Psoas muscle (tissue), 8 donors: ENCODE measurements at regions of chr6 and their contacts with region 1.

Region 1: DNA sequence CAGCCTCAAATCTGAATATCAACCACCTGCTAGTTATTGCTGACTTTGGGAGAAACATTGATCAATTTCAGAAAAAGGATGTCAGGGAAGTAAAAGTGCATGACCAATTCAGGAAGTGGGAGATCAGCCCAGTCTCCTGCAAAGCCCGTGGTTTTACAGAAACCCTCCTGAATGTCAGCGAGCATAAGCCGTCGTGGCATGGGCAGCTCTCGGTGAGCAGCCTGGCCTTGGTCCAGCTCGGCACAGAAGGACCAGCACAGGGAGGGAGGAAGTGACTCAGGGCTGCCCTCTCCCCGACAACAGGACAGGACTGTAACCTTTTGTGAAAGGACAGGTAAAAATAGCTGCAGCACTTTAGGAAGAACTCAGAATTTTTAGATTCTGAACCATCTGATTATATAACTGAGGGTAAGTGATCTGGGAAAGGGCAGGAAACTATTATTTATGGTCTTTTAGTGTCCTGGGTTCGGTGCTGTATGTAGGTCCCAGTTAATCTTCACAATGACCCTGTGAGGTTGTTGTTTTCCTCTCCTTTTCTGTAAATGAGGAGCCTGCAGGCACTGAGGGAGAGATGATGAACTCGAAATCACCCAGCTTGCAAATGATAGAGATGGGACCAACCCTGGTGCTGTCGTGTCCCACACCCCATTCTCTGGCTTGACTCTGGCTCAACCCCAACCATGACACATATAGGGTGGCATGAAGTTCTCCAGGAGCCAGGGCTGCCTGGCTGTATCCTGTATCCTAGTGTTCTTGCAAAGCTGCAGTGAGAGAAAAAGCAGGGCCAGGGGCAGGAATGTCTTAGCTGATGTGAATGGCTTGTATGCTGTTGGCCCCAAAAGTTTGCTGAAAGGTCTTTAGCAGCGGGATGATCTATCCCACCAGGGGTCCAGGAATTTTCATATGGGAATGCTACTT is 37.6 kb downstream of the NRN1 start:
- DNase-seq: peak; percentile 51 to 69
- ATAC-seq: peak; percentile 71 to 90 (median 79)
- H3K4me3 ChIP-seq: no peak overlapping the region
- H3K27ac ChIP-seq: no peak overlapping the region
- H3K4me1 ChIP-seq: no peaks in the 10 kb centered on the region
- H3K27me3 ChIP-seq: no peaks in the 10 kb centered on the region
- CTCF ChIP-seq: no peak

Region 2: DNA sequence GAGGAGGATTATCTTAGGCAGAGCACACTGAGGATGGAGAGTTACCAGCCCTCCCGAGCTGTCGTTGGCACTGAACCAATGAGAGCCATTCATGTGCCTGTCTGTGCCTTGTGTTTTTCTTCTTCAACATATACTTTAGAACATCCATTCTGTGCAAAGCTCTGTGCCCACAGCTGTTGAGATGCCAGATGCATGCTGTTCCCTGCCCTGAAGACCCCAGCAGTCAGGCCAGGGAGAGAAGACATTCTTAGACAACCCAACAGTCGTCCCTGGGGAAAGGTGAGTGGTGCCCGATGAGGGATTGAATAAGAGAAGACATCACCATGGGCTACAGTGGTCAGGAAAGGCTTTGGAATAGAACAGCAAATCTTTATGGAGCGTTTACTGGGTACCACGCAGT is 76.4 kb before region 1 on chr6:
- intact Hi-C with region 1: loop called in 1 of 2 experiments (anchors 2 kb)
- DNase-seq: no peak
- ATAC-seq: no peak
- H3K4me3 ChIP-seq: peak overlapping the region; percentile 48
- H3K27ac ChIP-seq: no peak overlapping the region
- H3K4me1 ChIP-seq: no peaks in the 10 kb centered on the region
- H3K27me3 ChIP-seq: no peaks in the 10 kb centered on the region
- CTCF ChIP-seq: no peak